Left cardiac atrium (tissue), 4 donors: ENCODE measurements at regions of chr1 and their contacts with region 1.

Region 1: DNA sequence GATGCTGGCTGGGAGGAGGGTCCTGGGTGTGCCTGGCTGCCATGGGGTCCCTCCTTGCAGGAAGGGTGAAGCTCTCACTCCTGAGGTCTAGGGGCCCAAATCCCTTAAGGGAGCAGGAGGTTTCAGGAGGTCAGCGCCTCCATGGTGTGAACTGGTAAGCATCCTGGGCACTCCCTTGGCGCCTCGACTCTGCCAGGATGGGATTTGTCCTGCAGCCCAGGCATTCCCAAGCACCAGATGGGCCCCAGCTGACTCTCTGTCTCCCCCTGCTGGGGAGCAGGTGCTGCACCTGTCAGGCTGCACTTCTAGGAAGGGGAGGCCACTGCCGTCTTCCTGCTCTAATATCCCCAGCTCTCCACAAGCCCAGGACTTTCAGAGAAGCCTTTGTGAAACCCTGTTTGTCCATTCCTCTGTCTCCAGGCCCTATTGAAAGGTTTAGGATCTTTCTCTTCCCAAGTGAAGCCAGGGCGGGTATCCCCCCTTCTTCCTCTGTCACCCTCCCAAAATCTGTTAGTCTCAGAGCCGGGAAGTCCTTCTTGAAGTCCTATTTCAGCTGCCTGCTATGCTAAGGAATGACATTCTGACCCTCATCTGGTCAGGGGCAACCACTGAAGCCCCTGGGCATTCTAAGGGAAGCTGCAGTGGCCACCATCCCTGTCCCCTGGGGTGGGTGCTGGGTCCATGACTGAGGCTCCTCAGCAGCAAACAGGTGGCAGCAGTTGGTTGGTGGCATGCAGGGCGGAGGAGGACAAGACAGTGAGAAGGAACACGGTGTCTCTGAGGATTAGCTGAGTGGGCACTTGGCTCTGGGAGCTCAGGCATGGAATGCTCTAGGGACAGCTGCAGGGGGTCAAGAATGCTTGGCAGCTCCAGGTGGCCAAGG is 3.3 kb downstream of the MYBPH start:
- DNase-seq: peak; percentile 63
- ATAC-seq: peak; percentile 62 to 64

Region 2: DNA sequence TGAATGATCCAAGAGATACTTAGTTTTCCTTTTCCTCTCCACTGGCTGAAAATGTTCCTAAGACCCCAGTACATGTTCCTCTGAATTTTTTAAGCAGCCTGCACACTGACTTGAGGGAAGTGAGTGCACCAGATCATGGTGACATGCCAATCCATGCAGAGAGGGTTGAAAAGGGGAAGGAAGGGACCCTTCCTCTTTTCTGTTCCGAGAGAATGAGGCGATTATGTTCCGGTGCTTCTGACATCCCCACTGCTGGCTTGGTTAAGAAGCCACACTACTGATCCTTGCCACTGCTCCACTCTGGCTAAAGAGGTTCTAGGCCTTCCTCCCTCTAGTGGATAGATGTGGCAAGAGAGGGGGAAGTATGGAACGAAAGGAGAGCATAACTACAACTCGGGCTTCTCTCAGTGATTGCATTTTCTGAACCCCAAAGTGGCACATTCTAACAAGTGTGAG is 203.5 kb before region 1 on chr1:
- intact Hi-C with region 1: no loop called
- DNase-seq: peak; percentile 45
- ATAC-seq: peak; percentile 36 to 39

Region 3: GRCh38 chr1:203117611-203118575 is 54.5 kb before region 1 on chr1:
- intact Hi-C with region 1: loop called (anchors 2 kb)
- DNase-seq: peak; percentile 82
- ATAC-seq: peak; percentile 94 to 96

Region 4: DNA sequence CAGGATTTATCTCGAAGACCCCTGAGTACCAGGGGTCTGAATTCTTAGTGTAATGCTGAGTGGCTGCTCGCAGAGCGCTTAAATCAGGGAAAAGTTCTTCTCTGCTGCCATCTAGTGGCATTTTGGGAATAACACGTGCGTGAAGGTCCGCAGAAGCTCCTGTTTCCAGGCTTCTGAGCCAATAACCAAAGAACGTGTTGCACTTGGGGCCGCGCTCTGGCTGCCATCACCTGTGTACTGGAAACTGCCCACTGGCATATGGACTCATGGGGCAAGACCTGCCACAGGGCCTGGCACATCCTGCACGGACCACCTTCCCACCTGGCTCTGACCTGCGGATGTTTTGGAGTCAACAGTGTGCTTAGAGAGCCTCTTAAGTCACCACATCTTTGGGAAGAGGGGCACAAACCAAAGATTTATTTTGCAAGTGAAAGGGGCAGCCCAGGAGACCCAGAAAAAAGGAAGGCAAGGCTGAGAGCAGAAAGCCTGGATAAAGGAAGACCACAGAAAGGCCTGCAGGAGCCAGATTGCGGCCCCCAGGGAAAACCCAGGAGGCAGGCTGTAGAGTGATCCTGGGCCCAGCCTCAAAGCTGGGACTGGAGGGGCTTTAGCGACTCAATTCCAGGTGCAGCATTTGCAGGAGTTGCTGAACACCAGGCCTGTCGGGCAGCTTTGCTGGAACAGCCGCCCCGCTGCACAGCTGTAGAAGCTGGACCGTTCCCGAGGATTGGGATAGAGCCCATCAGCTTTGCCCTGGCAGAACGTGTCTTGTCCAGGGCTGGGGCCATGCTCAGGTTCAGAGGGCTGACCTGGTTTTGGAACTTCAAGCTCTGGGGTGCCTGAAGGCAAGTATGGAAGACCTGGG is 44.1 kb after region 1 on chr1:
- intact Hi-C with region 1: loop called in 1 of 2 experiments (anchors 5 kb)
- DNase-seq: peak; percentile 42
- ATAC-seq: peak; percentile 81 to 82

Region 5: GRCh38 chr1:203229471-203230135 is 57.2 kb after region 1 on chr1 and contains the start of gene CHIT1:
- intact Hi-C with region 1: no loop called
- DNase-seq: no peak
- ATAC-seq: no peak
- total RNA-seq, gene CHIT1: 0.63 to 1.3 TPM

Region 6: GRCh38 chr1:203448521-203449061 is 276.2 kb after region 1 on chr1:
- intact Hi-C with region 1: no loop called
- DNase-seq: no peak
- ATAC-seq: peak; percentile 62 to 71